K562 (cell line): ENCODE measurements at regions of chr15 and their contacts with region 1.

Region 1: GRCh38 chr15:81939604-81940440 is 106.0 kb downstream of the MEX3B start:
- DNase-seq: peak; percentile 51 to 73 (median 56)
- ATAC-seq: no peak
- H3K4me3 ChIP-seq: no peak overlapping the region
- H3K27ac ChIP-seq: peak overlapping the region; percentile 21; the same call in 1 of the 3 replicates
- H3K4me1 ChIP-seq: peaks cover 21 to 41% of the 10 kb centered on the region in 2 experiments
- H3K27me3 ChIP-seq: no peaks in the 10 kb centered on the region
- CTCF ChIP-seq: peak; percentile 45 to 79 (median 79); a peak in 5 of 6 replicates
- EP300 ChIP-seq: peak; percentile 30; the same call in 1 of the 2 replicates
- POLR2A ChIP-seq: no peak
- RAD21 ChIP-seq: peak; percentile 86 to 92

Region 2: DNA sequence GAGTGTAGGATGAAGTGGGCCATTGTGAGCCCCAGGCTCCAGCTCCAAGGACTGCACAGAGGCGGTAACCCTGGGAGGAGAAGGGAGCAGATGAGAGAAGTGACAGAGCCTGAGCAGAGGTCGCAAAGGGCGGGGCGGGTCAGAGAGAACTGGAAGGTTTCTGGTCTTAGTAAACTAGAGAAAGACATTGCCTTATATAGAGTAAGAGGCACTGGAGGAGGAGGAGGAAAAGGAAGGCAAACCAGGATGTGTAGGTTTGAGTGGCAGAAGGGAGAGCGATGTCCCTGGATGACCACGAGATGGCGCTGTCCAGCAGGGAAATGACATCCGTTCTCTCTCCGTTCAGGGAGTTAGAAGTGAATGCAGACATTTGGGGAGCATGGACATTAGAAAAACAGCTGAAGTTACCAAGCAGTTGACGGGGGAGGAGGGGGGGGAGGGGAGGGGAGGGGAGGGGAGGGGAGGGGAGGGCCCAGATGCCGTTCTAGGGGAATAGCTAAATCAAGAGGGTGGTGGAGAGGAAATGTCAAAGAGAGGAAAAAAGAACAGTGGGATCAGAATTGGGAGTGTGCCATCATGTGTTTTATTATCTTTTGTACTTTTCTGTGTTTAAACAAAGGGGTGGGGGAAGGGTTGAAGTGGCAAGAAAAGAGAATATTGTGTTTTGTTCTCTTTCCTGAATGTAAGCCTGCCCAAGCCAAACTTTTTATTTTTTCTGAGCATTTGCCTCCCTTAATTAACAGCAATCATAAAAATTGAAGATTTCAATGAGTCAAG is 664.7 kb before region 1 on chr15:
- CTCF ChIA-PET with region 1: no interaction called
- POLR2A ChIA-PET with region 1: no interaction called
- in situ Hi-C with region 1: no loop called
- intact Hi-C with region 1: loop called (anchors 10 kb)
- DNase-seq: peak; percentile 75 to 86 (median 76)
- ATAC-seq: peak; percentile 98
- H3K4me3 ChIP-seq: no peak overlapping the region
- H3K27ac ChIP-seq: no peak overlapping the region
- H3K4me1 ChIP-seq: no peaks in the 10 kb centered on the region; a peak in 1 of 5 replicates
- H3K27me3 ChIP-seq: no peaks in the 10 kb centered on the region
- CTCF ChIP-seq: peak; percentile 84 to 94 (median 87)
- EP300 ChIP-seq: no peak
- POLR2A ChIP-seq: no peak
- RAD21 ChIP-seq: peak; percentile 70 to 85

Region 3: GRCh38 chr15:81400640-81401236 is 539.1 kb before region 1 on chr15:
- CTCF ChIA-PET with region 1: no interaction called
- POLR2A ChIA-PET with region 1: no interaction called
- in situ Hi-C with region 1: no loop called
- intact Hi-C with region 1: no loop called
- DNase-seq: peak; percentile 47 to 58 (median 52)
- ATAC-seq: peak; percentile 65
- H3K4me3 ChIP-seq: no peak overlapping the region
- H3K27ac ChIP-seq: no peak overlapping the region
- H3K4me1 ChIP-seq: no peaks in the 10 kb centered on the region
- H3K27me3 ChIP-seq: peaks cover 0 to 2% of the 10 kb centered on the region in 2 experiments; a peak in 2 of 5 replicates
- CTCF ChIP-seq: peak; percentile 60 to 85 (median 66); a peak in 5 of 6 replicates
- EP300 ChIP-seq: no peak
- POLR2A ChIP-seq: no peak
- RAD21 ChIP-seq: peak; percentile 54 to 86

Region 4: GRCh38 chr15:81492331-81492963 is 447.4 kb before region 1 on chr15:
- CTCF ChIA-PET with region 1: no interaction called
- POLR2A ChIA-PET with region 1: no interaction called
- in situ Hi-C with region 1: loop called (anchors 10 kb)
- intact Hi-C with region 1: no loop called
- DNase-seq: no peak
- ATAC-seq: no peak
- H3K4me3 ChIP-seq: no peak overlapping the region
- H3K27ac ChIP-seq: no peak overlapping the region
- H3K4me1 ChIP-seq: no peaks in the 10 kb centered on the region
- H3K27me3 ChIP-seq: peaks cover 0 to 22% of the 10 kb centered on the region in 2 experiments; a peak in 2 of 5 replicates
- CTCF ChIP-seq: no peak
- EP300 ChIP-seq: no peak
- POLR2A ChIP-seq: no peak
- RAD21 ChIP-seq: no peak

Region 5: DNA sequence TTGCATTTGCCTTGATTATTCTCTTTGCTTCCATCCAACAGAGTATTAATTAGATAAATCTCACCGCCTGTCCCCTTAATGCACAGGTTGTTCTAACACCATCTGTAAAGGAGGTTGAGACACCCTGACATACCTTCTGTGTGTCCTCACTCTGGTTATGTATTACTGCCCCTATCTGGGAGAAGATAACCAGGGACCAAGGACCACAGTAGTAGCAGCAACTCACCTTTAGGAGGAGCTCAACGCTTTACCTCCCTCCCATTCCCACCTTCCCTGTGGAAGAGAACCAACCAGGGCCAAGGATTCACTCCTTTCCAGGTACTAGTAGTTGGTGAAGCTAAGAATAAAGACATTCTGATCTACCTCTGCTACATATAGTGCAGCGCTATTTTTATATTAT is 126.6 kb before region 1 on chr15:
- CTCF ChIA-PET with region 1: no interaction called
- POLR2A ChIA-PET with region 1: no interaction called
- in situ Hi-C with region 1: no loop called
- intact Hi-C with region 1: loop called (anchors 2 kb)
- DNase-seq: peak; percentile 14 to 46 (median 26)
- ATAC-seq: peak; percentile 87
- H3K4me3 ChIP-seq: no peak overlapping the region
- H3K27ac ChIP-seq: no peak overlapping the region
- H3K4me1 ChIP-seq: no peaks in the 10 kb centered on the region
- H3K27me3 ChIP-seq: no peaks in the 10 kb centered on the region
- CTCF ChIP-seq: peak; percentile 55 to 83 (median 73)
- EP300 ChIP-seq: no peak
- POLR2A ChIP-seq: no peak
- RAD21 ChIP-seq: peak; percentile 52 to 82

Region 6: GRCh38 chr15:82046666-82047452 is 107.0 kb after region 1 on chr15:
- CTCF ChIA-PET with region 1: no interaction called
- POLR2A ChIA-PET with region 1: interaction called, 5 read pairs
- in situ Hi-C with region 1: no loop called
- intact Hi-C with region 1: loop called (anchors 1 kb)
- DNase-seq: peak; percentile 94 to 98 (median 97)
- ATAC-seq: peak; percentile 85
- H3K4me3 ChIP-seq: peak overlapping the region; percentile 86
- H3K27ac ChIP-seq: peak overlapping the region; percentile 96
- H3K4me1 ChIP-seq: peaks cover 2 to 44% of the 10 kb centered on the region in 2 experiments; a peak in 4 of 5 replicates
- H3K27me3 ChIP-seq: no peaks in the 10 kb centered on the region
- CTCF ChIP-seq: peak; percentile 66 to 80 (median 80)
- EP300 ChIP-seq: no peak; the same call in 1 of the 2 replicates
- POLR2A ChIP-seq: peak; percentile 75; the same call in 1 of the 2 replicates
- RAD21 ChIP-seq: peak; percentile 89 to 93